Sigmoid colon (tissue), 7 donors: ENCODE measurements at regions of chr1 and their contacts with region 1.

Region 1: DNA sequence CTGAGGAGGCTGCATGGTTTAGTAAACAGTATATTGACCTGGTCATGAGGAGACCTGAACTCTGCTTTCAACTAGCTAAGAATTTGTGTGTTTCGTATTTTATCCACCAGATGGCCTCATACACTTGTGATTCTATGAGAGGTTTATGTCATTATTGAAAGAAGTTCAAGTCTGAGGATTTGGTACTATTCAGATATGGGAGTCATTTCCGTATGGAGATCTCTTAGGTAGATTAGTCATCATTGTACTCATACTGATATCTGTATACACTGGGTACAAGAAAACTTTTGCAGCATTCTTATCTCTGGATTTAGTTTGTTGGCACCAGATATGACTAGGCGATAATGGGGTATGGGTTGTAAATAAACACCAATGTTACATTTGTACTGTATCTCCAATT is 26.6 kb downstream of the ATF6 start:
- DNase-seq: no peak
- H3K4me3 ChIP-seq: no peak overlapping the region
- H3K27ac ChIP-seq: peak overlapping the region in 2 of 4 donors; percentile 63 to 65
- H3K4me1 ChIP-seq: peaks cover 0 to 26% (median 14%) of the 10 kb centered on the region in 4 donors
- H3K27me3 ChIP-seq: no peaks in the 10 kb centered on the region
- CTCF ChIP-seq: peak; percentile 56 to 81 (median 62)
- EP300 ChIP-seq: no peak
- POLR2A ChIP-seq: no peak

Region 2: DNA sequence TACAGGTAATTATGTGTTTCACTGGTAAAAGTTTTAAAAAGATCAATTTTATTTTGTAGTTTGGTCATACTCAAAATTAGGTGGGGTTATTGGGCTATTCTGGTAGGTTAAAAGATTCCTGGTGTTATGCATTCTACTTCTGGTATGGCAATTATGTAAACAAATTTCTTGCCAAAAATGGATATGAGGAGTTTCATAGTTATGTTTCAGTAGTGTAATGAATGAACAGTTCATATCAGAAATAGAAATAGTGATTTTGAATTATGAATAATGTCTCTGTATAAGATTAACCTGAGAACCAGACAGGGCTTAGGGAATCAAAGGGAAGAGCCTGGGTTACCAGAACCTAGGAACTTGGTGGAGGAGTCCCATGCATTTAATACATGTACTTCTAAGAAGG is 10.7 kb before region 1 on chr1:
- intact Hi-C with region 1: no loop called
- DNase-seq: no peak
- H3K4me3 ChIP-seq: no peak overlapping the region
- H3K27ac ChIP-seq: no peak overlapping the region
- H3K4me1 ChIP-seq: peaks cover 0 to 12% (median 11%) of the 10 kb centered on the region in 4 donors
- H3K27me3 ChIP-seq: no peaks in the 10 kb centered on the region
- CTCF ChIP-seq: no peak
- EP300 ChIP-seq: no peak
- POLR2A ChIP-seq: no peak

Region 3: DNA sequence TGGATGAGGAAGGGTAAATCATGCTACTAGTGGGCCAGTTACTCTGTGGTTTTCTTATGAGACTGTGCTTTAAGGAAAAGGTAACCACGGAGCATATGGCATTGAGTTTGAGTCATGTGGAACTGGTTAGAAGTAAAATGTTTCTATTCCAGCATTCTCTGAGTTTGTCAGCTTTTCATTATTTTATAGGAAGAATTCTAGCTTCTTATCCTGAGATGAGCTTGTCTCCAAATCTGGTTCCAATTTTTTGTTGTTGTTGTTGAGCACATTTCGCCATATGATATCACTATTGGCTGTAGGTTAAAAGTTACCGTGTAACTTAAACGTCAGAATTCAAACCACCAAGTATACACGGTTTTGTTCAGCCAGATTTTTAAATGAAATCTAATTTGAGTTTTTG is 43.3 kb after region 1 on chr1:
- intact Hi-C with region 1: loop called (anchors 5 kb)
- DNase-seq: no peak
- H3K4me3 ChIP-seq: no peak overlapping the region
- H3K27ac ChIP-seq: no peak overlapping the region
- H3K4me1 ChIP-seq: peaks cover 0 to 26% (median 10%) of the 10 kb centered on the region in 4 donors
- H3K27me3 ChIP-seq: no peaks in the 10 kb centered on the region
- CTCF ChIP-seq: no peak
- EP300 ChIP-seq: no peak
- POLR2A ChIP-seq: no peak

Region 4: DNA sequence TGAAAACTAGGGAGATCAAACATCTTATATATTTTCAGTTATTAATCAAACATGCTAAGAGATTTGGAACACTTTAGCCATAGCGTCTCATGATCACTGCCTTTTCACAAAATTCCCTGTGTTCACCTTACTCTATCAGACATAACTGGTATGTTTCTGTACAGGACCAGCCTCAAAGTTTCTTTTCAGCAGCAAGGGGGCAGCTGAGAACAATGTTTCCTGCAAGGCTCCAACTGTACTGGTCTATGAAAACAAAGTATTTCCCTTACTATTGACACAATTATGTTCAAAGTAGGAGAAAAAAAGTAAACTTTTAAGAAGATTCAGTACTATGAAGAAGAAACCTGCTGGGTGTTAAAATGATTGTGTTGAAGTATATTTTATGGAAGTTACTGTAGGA is 71.8 kb after region 1 on chr1:
- intact Hi-C with region 1: loop called (anchors 10 kb)
- DNase-seq: peak; percentile 59
- H3K4me3 ChIP-seq: no peak overlapping the region
- H3K27ac ChIP-seq: peak overlapping the region in 1 of 4 donors; percentile 46
- H3K4me1 ChIP-seq: peaks cover 0 to 33% (median 17%) of the 10 kb centered on the region in 4 donors
- H3K27me3 ChIP-seq: no peaks in the 10 kb centered on the region
- CTCF ChIP-seq: peak in 3 of 4 experiments; percentile 43 to 47 (median 47)
- EP300 ChIP-seq: no peak
- POLR2A ChIP-seq: no peak

Region 5: DNA sequence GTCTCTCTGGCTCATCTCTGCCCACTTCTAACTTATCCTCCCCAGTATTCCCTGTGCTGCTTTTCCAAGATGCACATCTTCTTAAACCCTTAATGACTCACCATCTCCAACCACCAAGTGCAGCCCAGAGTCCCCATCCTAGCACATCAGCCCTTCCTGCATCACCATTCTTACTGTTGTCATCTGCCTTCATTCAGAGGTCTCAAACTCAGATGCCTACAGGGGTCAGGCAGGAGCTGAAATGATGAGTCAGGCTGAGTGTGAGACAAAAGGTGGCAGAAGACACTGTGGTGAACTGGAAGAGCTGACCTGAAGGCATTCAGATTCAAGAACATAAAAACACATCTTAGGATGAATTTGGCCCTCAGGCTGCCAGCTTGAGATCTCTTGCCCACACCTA is 196.4 kb after region 1 on chr1:
- intact Hi-C with region 1: loop called (anchors 5 kb)
- DNase-seq: no peak
- H3K4me3 ChIP-seq: no peak overlapping the region
- H3K27ac ChIP-seq: peak overlapping the region in 3 of 4 donors; percentile 72 to 85 (median 85)
- H3K4me1 ChIP-seq: peaks cover 0 to 61% (median 47%) of the 10 kb centered on the region in 4 donors
- H3K27me3 ChIP-seq: no peaks in the 10 kb centered on the region
- CTCF ChIP-seq: no peak
- EP300 ChIP-seq: no peak
- POLR2A ChIP-seq: no peak

Region 6: DNA sequence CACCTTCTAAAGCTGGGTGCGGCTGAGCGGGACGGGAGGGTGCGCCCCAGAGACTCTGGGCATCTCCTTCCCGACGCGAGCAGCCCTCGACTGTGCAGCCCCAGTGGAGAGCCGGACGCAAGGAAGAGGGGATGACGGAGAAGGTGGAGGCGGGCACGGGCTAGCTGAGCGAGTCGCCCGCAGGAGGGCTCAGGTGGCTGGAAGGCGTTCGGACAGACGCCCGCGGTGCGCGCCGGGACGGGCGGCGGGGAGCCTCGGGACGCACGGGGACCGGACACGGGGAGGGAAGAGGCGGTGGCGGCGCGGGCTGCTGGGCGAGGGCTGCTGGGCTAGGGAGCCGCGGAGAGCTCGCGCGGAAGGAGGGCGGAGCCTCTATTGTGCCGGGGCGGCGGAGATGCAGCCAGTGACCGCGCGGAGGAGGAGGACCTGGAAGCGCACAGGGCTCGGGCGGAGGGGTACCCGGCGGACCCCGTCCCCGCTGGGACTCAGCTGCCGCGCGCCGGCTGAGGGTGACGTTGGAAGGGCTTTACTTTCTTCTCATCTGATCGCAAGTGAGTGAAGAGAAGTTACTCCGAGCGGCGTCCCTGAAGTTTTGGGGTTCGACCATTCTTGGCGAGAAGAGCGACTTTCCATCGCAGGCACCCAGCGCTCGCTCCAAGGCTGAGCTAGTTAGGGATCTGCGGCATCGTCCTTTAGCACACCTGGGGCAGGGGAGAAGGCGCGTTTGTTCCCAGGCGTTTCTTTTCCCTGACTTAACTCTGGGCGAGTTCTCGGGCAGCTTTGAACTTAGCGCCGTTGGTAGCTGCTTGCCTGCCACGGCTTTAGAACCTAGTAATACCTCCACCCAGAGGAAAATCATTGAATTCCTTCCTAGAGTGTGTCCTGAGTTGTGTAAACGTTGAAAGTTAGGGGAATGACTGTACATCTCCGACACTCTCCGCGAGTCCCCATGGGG is 231.1 kb after region 1 on chr1 and contains the start of gene OLFML2B:
- intact Hi-C with region 1: loop called (anchors 5 kb)
- DNase-seq: peak; percentile 89
- H3K4me3 ChIP-seq: peak within 1 kb of the TSS; percentile 58 to 72 (median 67)
- H3K27ac ChIP-seq: peak within 1 kb of the TSS; percentile 33 to 84 (median 83)
- H3K4me1 ChIP-seq: peaks cover 0 to 52% (median 42%) of the 10 kb centered on the region in 4 donors
- H3K27me3 ChIP-seq: no peaks in the 10 kb centered on the region
- CTCF ChIP-seq: peak in 3 of 4 experiments; percentile 16 to 32 (median 23)
- EP300 ChIP-seq: no peak
- POLR2A ChIP-seq: peak; percentile 5 to 34
- total RNA-seq, gene OLFML2B: 14.3 to 27.4 (median 20.2) TPM

Region 7: DNA sequence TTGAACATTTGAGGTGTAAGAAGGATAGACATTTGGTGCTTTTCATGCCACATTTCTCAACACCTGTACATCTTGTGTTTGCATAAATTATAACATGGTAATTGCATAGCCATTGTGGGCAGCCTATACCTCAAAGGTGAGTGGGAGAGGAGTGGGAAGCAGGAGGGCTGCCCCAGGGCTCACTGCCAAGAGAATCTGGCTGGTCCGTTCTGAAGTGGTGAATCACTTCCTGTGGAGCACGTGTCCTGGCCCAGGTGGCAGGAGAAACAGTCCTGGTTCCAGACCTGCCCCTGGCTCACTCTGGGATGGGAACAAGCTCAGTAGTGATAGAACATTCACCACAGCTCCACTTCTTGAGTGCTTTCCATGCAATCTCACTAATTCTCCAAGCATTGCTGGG is 242.5 kb after region 1 on chr1:
- intact Hi-C with region 1: loop called (anchors 2 kb)
- DNase-seq: no peak
- H3K4me3 ChIP-seq: no peak overlapping the region
- H3K27ac ChIP-seq: no peak overlapping the region
- H3K4me1 ChIP-seq: peaks cover 0 to 9% (median 0%) of the 10 kb centered on the region in 4 donors
- H3K27me3 ChIP-seq: no peaks in the 10 kb centered on the region
- CTCF ChIP-seq: no peak
- EP300 ChIP-seq: no peak
- POLR2A ChIP-seq: no peak

Region 8: GRCh38 chr1:162213281-162213912 is 420.7 kb after region 1 on chr1:
- intact Hi-C with region 1: loop called (anchors 10 kb)
- DNase-seq: peak; percentile 92
- H3K4me3 ChIP-seq: no peak overlapping the region
- H3K27ac ChIP-seq: peak overlapping the region; percentile 70 to 86 (median 78)
- H3K4me1 ChIP-seq: peaks cover 0 to 98% (median 82%) of the 10 kb centered on the region in 4 donors
- H3K27me3 ChIP-seq: no peaks in the 10 kb centered on the region
- CTCF ChIP-seq: no peak
- EP300 ChIP-seq: peak in 3 of 4 donors; percentile 29 to 52 (median 39)
- POLR2A ChIP-seq: no peak

Region 9: DNA sequence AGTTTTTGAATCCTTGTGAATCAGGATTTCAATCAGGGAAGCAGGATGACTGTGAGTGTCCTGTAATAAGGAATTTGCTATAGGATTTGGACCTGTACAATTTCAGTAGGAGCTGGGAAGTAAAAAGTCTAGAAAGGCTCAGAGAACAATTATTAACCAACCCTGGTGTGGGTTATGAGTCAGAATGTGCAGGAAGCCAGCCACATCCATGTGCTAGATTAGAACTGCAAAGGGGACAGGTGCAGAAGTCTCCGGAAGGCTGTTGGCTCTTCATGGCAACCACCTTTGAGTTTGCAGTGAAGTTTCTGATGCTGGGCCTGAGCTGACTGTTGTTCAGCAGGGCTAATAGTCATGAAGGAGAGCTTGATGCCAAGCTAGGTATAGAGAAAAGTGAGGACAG is 513.2 kb after region 1 on chr1:
- intact Hi-C with region 1: no loop called
- DNase-seq: no peak
- H3K4me3 ChIP-seq: no peak overlapping the region
- H3K27ac ChIP-seq: no peak overlapping the region
- H3K4me1 ChIP-seq: no peaks in the 10 kb centered on the region
- H3K27me3 ChIP-seq: no peaks in the 10 kb centered on the region
- CTCF ChIP-seq: no peak
- EP300 ChIP-seq: no peak
- POLR2A ChIP-seq: no peak

Region 10: DNA sequence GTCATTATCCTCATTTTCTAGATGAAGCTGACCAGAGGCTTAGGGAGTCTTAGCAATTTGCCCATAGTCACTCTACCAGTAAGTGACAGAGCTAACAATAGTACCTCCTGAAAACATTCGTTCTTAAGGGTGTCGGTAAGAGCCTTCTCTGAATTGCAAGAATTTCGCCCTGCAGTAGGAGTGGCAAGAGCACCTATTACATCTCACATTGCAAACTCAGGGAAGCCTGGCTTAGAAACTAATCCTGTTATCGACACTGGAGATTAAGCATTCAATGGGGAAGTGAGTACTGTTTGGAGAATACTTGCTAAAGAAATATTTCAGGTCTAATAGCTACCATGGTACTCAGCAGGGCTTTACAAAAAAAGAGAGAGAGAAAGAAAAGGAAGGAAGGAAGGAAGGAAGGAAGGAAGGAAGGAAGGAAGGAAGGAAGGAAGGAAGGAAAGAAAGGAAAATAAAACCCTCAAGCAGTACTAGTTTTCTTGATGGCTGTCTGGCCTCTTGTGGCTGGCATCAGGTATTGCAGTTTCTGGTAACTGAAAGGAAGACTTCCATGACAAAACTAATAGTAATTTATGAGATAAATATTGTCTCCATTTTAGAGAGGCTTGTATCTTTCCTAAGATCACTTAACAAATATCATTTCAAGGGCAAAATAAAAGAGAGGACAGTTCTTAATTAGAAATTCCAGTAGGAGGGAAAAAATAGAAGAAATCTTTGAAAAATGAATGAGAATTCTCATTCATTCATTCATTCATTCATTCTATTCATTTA is 599.2 kb after region 1 on chr1:
- intact Hi-C with region 1: no loop called
- DNase-seq: no peak
- H3K4me3 ChIP-seq: no peak overlapping the region
- H3K27ac ChIP-seq: no peak overlapping the region
- H3K4me1 ChIP-seq: peaks cover 0 to 3% (median 0%) of the 10 kb centered on the region in 4 donors
- H3K27me3 ChIP-seq: peaks cover 0 to 6% (median 0%) of the 10 kb centered on the region in 3 donors
- CTCF ChIP-seq: peak; percentile 72 to 94 (median 87)
- EP300 ChIP-seq: no peak
- POLR2A ChIP-seq: no peak